ENCODE measurements at regions of chr14 and their contacts with region 1.

Region 1: DNA sequence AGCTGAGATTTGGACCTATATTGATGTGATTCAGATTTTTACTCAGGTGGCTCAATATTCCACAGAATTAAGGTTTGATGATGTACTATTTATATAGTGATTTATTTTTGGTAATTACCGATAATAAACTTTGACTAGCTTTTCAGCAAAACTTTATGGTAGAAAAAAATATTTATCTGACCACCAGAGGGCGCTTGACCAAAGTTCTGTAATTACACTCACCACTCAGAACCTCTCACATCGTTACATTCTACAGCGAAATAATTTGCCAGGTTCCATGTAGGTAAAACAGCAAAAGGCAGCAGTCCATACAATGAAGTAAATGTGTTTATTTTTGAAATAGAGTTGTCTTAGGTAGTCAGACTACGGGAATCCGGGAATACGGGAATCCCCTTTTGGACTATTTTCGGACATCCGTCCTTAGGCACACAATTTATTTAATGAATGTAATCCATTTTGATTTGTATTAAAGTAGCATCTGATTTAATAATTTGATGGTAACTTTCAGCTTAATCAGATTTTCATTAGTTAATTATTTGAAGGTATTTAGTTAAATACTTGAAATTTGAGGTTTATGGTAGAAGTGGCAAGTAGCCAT is 143.0 kb upstream of the DDHD1 start:
- DNase-seq: no peak
- ATAC-seq: no peak

Region 2: DNA sequence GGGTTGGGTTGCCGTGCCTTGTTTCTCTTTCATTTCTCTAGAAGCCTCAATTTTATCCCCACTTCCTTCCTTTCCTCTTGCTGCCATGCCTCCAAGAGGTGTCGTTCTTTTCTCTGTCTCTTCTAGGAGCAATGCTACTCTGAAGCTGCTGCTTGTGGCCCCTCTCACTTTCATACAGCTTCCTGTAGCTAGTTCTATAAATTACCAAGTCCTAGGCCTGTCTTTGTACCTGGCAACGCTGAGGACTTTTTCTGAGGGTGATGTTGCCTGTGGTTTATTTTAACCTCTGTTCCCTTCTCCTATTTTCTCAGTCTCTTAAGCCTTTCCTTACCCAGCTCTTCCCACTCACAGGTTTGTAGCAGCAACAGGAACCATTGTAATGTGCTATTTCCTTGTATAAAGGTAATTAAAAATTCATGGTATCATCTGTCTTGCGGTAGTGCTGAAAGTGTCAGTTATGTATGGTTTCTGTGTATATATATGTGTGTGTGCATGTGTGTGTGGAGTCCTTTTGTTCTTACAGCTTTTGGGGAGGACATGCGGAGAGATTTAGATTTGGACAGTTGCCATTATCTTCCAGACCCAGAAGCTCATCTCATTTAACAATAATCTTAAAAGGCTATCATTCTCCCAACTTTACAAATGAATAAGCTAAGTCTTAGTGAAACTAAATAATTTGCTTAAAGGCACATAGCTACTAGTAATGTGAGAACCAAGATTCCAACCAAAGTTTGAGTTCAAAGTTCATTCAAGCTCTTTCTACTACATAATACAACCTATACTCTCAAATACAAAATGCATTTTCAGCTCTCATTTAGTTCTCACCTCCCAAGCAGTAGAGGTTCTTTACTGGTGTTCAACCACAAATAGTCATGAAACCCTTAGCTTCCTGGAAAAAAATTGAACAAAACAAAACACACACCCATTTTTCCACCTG is 186.7 kb before region 1 on chr14:
- intact Hi-C with region 1: no loop called
- DNase-seq: no peak
- ATAC-seq: no peak

Region 3: DNA sequence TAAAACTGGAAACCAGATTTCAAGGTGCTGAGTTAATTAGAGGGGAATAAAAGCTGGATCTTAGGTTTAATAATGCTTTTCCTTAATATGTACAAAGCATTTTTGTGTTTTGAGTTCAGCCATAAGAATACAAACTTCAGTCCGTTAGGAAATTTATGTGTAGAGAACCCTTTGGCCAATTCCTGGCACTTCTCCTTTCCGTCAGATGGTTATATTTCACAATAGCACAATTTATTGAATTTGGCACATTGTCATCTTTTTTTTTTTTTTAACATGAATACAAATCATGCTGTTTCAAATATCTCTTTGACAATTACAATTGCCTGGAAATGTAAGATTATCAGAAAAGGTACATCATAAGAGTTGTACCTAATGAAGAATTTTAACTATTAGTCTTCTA is 86.7 kb before region 1 on chr14:
- intact Hi-C with region 1: no loop called
- DNase-seq: no peak
- ATAC-seq: no peak

Region 4: GRCh38 chr14:53596853-53597525 is 300.9 kb after region 1 on chr14:
- intact Hi-C with region 1: no loop called
- DNase-seq: no peak
- ATAC-seq: no peak

Region 5: DNA sequence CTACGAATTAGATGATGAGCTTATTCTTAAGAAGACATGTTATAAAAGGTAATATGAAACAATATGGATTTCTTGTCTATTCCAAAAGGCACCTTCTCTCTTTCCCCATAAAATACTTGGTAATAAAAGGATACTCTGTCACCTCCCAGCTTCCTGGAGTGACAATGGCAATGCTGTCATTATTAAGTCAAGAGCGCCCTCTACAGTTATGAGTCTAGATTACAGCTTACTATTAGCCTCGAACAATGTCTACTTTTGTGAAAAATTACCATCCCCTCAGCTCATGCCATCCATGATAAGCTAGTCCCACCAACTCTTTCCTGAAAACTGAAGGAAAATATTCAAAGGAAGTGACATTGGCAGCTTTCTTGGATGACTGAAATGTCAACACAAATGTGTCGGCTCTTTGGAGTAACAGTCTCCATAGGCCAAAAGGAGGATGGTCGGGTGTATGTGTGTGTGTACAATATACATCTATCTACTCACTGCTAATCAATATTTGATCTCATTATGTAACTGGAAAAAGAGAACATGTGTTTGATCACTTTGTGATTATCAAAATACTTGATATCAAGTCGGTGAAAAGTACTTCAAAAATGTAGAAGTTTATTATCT is 1052.0 kb after region 1 on chr14:
- intact Hi-C with region 1: loop called (anchors 10 kb)
- DNase-seq: no peak
- ATAC-seq: peak; percentile 75